IMR-90 (cell line): ENCODE measurements at regions of chr15 and their contacts with region 1.

Region 1: DNA sequence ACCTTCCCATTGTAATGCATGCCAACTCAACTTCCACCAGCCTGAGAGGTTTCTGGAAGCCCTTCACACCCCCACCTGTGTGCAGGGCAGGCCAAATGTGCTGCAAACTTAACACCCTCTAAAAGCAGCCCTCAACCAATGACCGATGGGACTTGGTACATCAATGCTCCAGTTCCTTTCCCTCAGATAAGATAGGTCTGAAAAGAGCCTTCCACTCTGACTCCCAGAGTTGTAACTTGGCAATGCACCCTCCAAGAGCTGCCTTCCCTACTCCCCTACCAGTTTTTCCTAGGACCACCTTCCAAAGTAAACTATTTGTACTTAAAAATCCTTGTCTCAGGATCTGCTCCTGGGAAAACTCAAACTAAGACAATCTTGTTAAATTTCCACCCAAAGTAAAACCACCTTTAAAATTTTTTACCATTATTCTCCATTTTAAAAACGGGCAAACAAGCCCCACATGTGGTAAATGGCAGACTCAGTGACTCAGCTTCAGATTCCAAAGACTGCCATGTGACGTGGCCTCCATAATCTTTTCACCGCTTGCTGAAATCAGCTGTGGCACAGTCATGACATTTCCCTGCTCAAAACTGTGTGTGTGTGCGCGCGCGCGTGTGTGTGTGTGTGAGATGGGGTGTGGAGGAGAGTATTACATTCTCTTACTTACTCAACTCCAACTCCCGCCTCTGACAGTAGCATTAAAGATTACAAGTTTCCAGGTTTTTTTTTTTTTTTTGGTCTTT is 17.2 kb downstream of the RASGRP1 start:
- DNase-seq: peak; percentile 70
- ATAC-seq: no peak
- H3K4me3 ChIP-seq: no peak overlapping the region
- H3K27ac ChIP-seq: no peak overlapping the region
- H3K4me1 ChIP-seq: peaks cover 4% of the 10 kb centered on the region; the same call in 1 of the 2 replicates
- H3K27me3 ChIP-seq: no peaks in the 10 kb centered on the region
- CTCF ChIP-seq: no peak
- POLR2A ChIP-seq: no peak
- RAD21 ChIP-seq: no peak

Region 2: GRCh38 chr15:38275959-38276358 is 271.5 kb before region 1 on chr15:
- CTCF ChIA-PET with region 1: no interaction called
- POLR2A ChIA-PET with region 1: no interaction called
- dilution Hi-C with region 1: no loop called
- in situ Hi-C with region 1: no loop called
- intact Hi-C with region 1: no loop called
- DNase-seq: peak; percentile 79
- ATAC-seq: no peak
- H3K4me3 ChIP-seq: no peak overlapping the region
- H3K27ac ChIP-seq: no peak overlapping the region
- H3K4me1 ChIP-seq: peaks cover 4% of the 10 kb centered on the region
- H3K27me3 ChIP-seq: no peaks in the 10 kb centered on the region
- CTCF ChIP-seq: no peak
- POLR2A ChIP-seq: no peak
- RAD21 ChIP-seq: no peak

Region 3: GRCh38 chr15:38479266-38479665 is 68.2 kb before region 1 on chr15:
- CTCF ChIA-PET with region 1: no interaction called
- POLR2A ChIA-PET with region 1: no interaction called
- dilution Hi-C with region 1: no loop called
- in situ Hi-C with region 1: no loop called
- intact Hi-C with region 1: loop called (anchors 5 kb)
- DNase-seq: peak; percentile 29
- ATAC-seq: peak; percentile 25
- H3K4me3 ChIP-seq: no peak overlapping the region
- H3K27ac ChIP-seq: no peak overlapping the region
- H3K4me1 ChIP-seq: peaks cover 4% of the 10 kb centered on the region; the same call in 1 of the 2 replicates
- H3K27me3 ChIP-seq: no peaks in the 10 kb centered on the region
- CTCF ChIP-seq: no peak
- POLR2A ChIP-seq: no peak
- RAD21 ChIP-seq: no peak

Region 4: DNA sequence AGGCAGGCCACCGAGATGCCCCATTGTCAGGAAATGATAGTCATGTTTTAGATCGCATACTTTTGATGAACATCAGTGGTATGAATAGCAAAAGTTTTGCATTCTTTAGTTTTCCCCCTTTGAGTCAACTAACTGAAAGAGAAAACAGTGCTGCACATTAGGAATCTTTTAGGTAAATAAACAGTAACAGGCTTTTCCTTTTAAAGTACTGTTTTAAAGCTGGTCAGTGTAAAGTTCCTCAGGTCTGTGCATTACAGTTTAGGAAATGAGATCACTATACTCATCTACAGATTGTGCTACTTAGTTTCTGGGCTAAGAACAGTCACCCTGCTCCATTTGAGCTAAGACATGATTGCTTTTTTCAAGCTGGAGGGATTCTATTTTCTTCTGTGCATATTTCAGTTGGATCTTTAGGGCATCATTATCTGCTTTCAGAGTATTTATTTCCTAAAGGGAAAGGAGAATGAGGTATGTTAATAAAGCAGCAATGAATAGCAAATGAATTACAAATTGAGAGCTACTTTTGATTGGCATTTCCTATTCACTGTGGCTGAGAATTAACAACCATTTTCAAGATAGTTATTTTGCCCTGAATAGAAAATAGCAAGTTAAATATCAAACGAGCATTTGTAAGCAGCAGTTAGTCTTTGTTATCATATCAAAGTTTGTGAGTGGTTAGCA is 57.0 kb before region 1 on chr15:
- CTCF ChIA-PET with region 1: no interaction called
- POLR2A ChIA-PET with region 1: no interaction called
- dilution Hi-C with region 1: no loop called
- in situ Hi-C with region 1: no loop called
- intact Hi-C with region 1: loop called (anchors 5 kb)
- DNase-seq: peak; percentile 87
- ATAC-seq: peak; percentile 87
- H3K4me3 ChIP-seq: no peak overlapping the region
- H3K27ac ChIP-seq: peak overlapping the region; percentile 93
- H3K4me1 ChIP-seq: peaks cover 12% of the 10 kb centered on the region
- H3K27me3 ChIP-seq: no peaks in the 10 kb centered on the region
- CTCF ChIP-seq: no peak
- POLR2A ChIP-seq: no peak
- RAD21 ChIP-seq: no peak